OCI-LY7 (cell line): ENCODE measurements at regions of chr2 and their contacts with region 1.

Region 1: DNA sequence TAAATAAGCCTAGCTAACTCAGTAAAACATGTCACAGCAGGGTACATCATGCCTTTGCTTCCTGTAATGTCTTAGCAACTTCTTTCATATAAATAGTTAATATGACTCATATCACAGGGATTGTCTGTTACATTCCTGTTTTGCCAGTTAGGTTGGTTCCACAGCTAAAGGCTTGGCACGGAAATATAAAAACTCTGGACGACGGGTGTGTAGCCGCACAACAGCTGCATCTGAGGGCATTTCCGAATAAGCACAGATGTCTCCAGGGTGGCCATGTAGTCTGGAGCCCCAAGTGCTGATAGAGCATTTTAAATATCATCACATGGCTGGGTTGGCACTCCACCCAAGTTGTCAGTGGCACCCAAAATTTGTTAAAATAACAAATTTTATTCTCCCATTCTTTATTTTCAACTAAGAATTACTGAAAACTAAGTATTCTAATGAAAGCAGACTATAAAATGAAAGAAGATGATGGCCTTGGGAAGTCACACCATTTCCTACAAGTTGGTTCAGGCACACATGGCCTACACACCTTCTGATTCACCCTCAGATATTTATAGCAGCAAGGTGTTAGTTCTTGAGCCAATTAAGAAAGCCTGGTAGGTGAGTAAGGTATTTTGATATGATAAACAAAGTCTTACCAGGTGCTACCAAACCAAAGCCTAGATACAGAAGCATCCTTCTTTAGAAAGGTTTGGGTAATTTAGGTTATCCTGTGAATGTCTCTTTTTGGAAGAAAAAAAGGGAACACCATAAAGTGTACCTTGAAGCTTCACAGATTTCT is 61.8 kb upstream of the STK17B start:
- DNase-seq: peak; percentile 45
- H3K4me3 ChIP-seq: peak overlapping the region; percentile 9
- H3K27ac ChIP-seq: peak overlapping the region; percentile 79
- H3K4me1 ChIP-seq: peaks cover 54% of the 10 kb centered on the region
- CTCF ChIP-seq: no peak

Region 2: GRCh38 chr2:196160101-196160500 is 73.1 kb before region 1 on chr2:
- CTCF ChIA-PET with region 1: no interaction called
- POLR2A ChIA-PET with region 1: interaction called, 14 read pairs
- intact Hi-C with region 1: no loop called
- DNase-seq: peak; percentile 91
- H3K4me3 ChIP-seq: peak overlapping the region; percentile 54
- H3K27ac ChIP-seq: peak overlapping the region; percentile 82
- H3K4me1 ChIP-seq: peaks cover 84% of the 10 kb centered on the region
- CTCF ChIP-seq: no peak

Region 3: GRCh38 chr2:196187898-196188458 is 45.2 kb before region 1 on chr2:
- CTCF ChIA-PET with region 1: no interaction called
- POLR2A ChIA-PET with region 1: interaction called, 139 read pairs
- intact Hi-C with region 1: no loop called
- DNase-seq: peak; percentile 74
- H3K4me3 ChIP-seq: peak overlapping the region; percentile 8
- H3K27ac ChIP-seq: peak overlapping the region; percentile 64
- H3K4me1 ChIP-seq: peaks cover 69% of the 10 kb centered on the region
- CTCF ChIP-seq: no peak

Region 4: GRCh38 chr2:196195302-196195701 is 37.9 kb before region 1 on chr2:
- CTCF ChIA-PET with region 1: interaction called, 3 read pairs
- POLR2A ChIA-PET with region 1: interaction called, 29 read pairs
- intact Hi-C with region 1: no loop called
- DNase-seq: no peak
- H3K4me3 ChIP-seq: peak overlapping the region; percentile 35
- H3K27ac ChIP-seq: peak overlapping the region; percentile 10
- H3K4me1 ChIP-seq: peaks cover 34% of the 10 kb centered on the region
- CTCF ChIP-seq: no peak

Region 5: DNA sequence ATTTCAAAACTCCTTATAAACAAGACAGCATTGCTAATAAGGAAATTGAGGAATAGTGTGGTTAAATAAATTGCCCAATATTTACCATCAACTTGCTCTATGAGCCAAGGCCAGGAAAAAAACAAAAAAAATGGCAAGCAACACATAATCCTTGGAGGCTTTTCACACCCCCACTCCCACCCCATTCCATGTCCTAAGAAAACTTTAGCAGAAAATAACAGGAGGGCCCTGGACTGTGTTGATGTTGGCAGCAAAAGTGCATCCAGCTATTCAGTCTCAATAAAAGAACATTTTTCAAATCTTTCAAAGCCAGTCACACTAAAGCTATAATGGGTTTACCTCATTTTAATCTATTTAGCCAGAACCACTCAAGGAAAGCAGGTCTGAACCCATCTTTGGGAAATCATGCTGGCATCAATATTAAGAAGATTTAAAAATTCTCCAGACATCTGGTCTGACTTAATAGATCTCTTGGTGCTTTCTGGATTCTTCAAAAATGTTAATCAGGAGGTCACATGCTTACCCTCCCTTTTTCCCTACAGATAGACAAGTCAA is 27.3 kb before region 1 on chr2:
- CTCF ChIA-PET with region 1: no interaction called
- POLR2A ChIA-PET with region 1: interaction called, 11 read pairs
- intact Hi-C with region 1: loop called (anchors 2 kb)
- DNase-seq: no peak
- H3K4me3 ChIP-seq: no peak overlapping the region
- H3K27ac ChIP-seq: no peak overlapping the region
- H3K4me1 ChIP-seq: peaks cover 55% of the 10 kb centered on the region
- CTCF ChIP-seq: no peak

Region 6: GRCh38 chr2:196249860-196250259 is 16.6 kb after region 1 on chr2:
- CTCF ChIA-PET with region 1: interaction called, 5 read pairs
- POLR2A ChIA-PET with region 1: interaction called, 27 read pairs
- intact Hi-C with region 1: no loop called
- DNase-seq: peak; percentile 78
- H3K4me3 ChIP-seq: peak overlapping the region; percentile 0
- H3K27ac ChIP-seq: peak overlapping the region; percentile 19
- H3K4me1 ChIP-seq: peaks cover 49% of the 10 kb centered on the region
- CTCF ChIP-seq: 0 out of 2 replicates have a peak, but pooled peaks have one; percentile 20

Region 7: GRCh38 chr2:196268538-196269338 is 35.5 kb after region 1 on chr2:
- CTCF ChIA-PET with region 1: no interaction called
- POLR2A ChIA-PET with region 1: interaction called, 59 read pairs
- intact Hi-C with region 1: no loop called
- DNase-seq: peak; percentile 48
- H3K4me3 ChIP-seq: peak overlapping the region; percentile 36
- H3K27ac ChIP-seq: peak overlapping the region; percentile 66
- H3K4me1 ChIP-seq: peaks cover 89% of the 10 kb centered on the region
- CTCF ChIP-seq: no peak